OCI-LY7 (cell line): ENCODE measurements at regions of chr2 and their contacts with region 1.

Region 1: GRCh38 chr2:239143858-239144718 is 256.7 kb downstream of the HDAC4 start:
- DNase-seq: peak; percentile 47
- H3K4me3 ChIP-seq: no peak overlapping the region
- H3K27ac ChIP-seq: no peak overlapping the region
- H3K4me1 ChIP-seq: no peaks in the 10 kb centered on the region
- CTCF ChIP-seq: peak; percentile 74

Region 2: DNA sequence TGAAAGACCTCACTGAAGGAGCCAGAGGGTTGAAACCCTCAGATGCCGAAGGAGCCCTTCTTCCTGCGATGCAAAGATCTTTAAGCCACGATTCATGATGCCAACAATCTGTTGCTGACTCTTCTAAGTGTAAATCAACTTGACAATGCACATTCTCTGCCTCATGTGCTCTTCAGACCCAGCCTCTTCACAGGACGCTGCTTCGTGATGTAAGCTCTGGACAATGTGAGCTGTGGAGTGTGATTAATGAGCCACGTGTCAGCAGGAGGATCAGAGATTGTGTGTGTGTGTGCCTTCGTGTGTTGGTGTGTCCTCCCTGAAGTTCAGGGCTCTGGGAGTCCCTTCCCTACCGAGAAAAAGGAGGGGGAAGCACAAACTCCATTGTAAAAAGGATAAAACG is 322.7 kb before region 1 on chr2:
- CTCF ChIA-PET with region 1: no interaction called
- POLR2A ChIA-PET with region 1: no interaction called
- intact Hi-C with region 1: no loop called
- DNase-seq: no peak
- H3K4me3 ChIP-seq: no peak overlapping the region
- H3K27ac ChIP-seq: no peak overlapping the region
- H3K4me1 ChIP-seq: no peaks in the 10 kb centered on the region
- CTCF ChIP-seq: no peak

Region 3: GRCh38 chr2:239257511-239257937 is 113.4 kb after region 1 on chr2:
- CTCF ChIA-PET with region 1: no interaction called
- POLR2A ChIA-PET with region 1: no interaction called
- intact Hi-C with region 1: loop called (anchors 10 kb)
- DNase-seq: no peak
- H3K4me3 ChIP-seq: no peak overlapping the region
- H3K27ac ChIP-seq: no peak overlapping the region
- H3K4me1 ChIP-seq: peaks cover 49% of the 10 kb centered on the region
- CTCF ChIP-seq: no peak

Region 4: GRCh38 chr2:239293775-239294430 is 149.8 kb after region 1 on chr2:
- CTCF ChIA-PET with region 1: no interaction called
- POLR2A ChIA-PET with region 1: no interaction called
- intact Hi-C with region 1: loop called (anchors 5 kb)
- DNase-seq: no peak
- H3K4me3 ChIP-seq: no peak overlapping the region
- H3K27ac ChIP-seq: no peak overlapping the region
- H3K4me1 ChIP-seq: peaks cover 16% of the 10 kb centered on the region
- CTCF ChIP-seq: no peak

Region 5: GRCh38 chr2:239380831-239381708 is 237.0 kb after region 1 on chr2:
- CTCF ChIA-PET with region 1: no interaction called
- POLR2A ChIA-PET with region 1: no interaction called
- intact Hi-C with region 1: loop called (anchors 5 kb)
- DNase-seq: peak; percentile 33
- H3K4me3 ChIP-seq: peak overlapping the region; percentile 6
- H3K27ac ChIP-seq: no peak overlapping the region
- H3K4me1 ChIP-seq: peaks cover 19% of the 10 kb centered on the region
- CTCF ChIP-seq: no peak

Region 6: GRCh38 chr2:239401067-239401880 is 257.2 kb after region 1 on chr2:
- CTCF ChIA-PET with region 1: no interaction called
- POLR2A ChIA-PET with region 1: no interaction called
- intact Hi-C with region 1: loop called (anchors 1 kb)
- DNase-seq: peak; percentile 97
- H3K4me3 ChIP-seq: peak overlapping the region; percentile 68
- H3K27ac ChIP-seq: peak overlapping the region; percentile 54
- H3K4me1 ChIP-seq: peaks cover 19% of the 10 kb centered on the region
- CTCF ChIP-seq: no peak

Region 7: DNA sequence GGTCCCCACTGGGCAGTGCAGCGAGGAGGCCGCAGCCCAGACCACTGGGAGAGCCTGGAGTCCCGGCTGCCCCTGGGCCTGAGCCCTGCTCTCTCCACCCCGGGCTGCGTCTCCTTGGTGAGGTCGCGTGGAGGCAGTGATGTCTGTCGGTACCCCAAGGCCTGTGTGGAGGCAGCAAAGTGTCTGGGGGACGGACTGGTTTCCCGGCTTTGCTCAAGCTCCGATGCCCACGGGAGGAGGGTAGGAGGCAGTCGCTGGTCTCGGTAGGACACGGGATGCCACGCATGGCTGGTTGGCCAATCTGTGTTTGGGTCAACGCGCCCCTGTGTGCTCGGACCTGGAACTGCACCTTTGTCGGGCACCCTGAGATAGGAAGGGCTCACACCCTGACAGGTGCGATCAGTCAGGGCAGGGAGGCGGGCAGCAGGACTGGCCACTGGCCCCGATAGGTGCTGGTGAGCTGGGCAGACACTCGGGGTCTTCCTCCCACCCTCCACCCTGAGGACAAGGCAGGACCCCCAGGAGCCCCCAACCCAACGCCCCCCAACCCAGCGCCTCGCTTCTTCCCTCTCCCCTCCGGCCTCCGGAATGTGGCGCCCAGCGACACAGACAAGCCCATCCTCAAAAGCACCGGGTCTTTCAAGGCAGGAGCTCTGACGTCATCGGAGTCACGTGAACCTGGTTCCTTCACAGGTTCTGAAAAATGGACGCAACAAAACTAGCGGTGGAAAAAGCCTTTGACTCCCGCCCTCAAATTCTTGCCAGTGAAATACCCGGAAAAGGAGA is 592.5 kb after region 1 on chr2:
- CTCF ChIA-PET with region 1: interaction called, 16 read pairs
- POLR2A ChIA-PET with region 1: no interaction called
- intact Hi-C with region 1: no loop called
- DNase-seq: no peak
- H3K4me3 ChIP-seq: no peak overlapping the region
- H3K27ac ChIP-seq: no peak overlapping the region
- H3K4me1 ChIP-seq: no peaks in the 10 kb centered on the region
- CTCF ChIP-seq: no peak